ENCODE measurements at regions of chr1 and their contacts with region 1.

Region 1: GRCh38 chr1:166838766-166839599 is at the start of gene POGK:
- DNase-seq: peak; percentile 91 to 93
- H3K4me3 ChIP-seq: peak within 1 kb of the TSS; percentile 83
- H3K4me3 Mint-ChIP-seq: peak within 1 kb of the TSS; percentile 78
- H3K27ac Mint-ChIP-seq: peak within 1 kb of the TSS; percentile 91
- H3K4me1 ChIP-seq: peaks cover 40% of the 10 kb centered on the region
- H3K4me1 Mint-ChIP-seq: peaks cover 37% of the 10 kb centered on the region
- H3K27me3 ChIP-seq: no peaks in the 10 kb centered on the region
- H3K27me3 Mint-ChIP-seq: no peaks in the 10 kb centered on the region
- CTCF ChIP-seq: no peak
- total RNA-seq, gene POGK: 27.2 and 29.8 TPM in 2 replicates

Region 2: DNA sequence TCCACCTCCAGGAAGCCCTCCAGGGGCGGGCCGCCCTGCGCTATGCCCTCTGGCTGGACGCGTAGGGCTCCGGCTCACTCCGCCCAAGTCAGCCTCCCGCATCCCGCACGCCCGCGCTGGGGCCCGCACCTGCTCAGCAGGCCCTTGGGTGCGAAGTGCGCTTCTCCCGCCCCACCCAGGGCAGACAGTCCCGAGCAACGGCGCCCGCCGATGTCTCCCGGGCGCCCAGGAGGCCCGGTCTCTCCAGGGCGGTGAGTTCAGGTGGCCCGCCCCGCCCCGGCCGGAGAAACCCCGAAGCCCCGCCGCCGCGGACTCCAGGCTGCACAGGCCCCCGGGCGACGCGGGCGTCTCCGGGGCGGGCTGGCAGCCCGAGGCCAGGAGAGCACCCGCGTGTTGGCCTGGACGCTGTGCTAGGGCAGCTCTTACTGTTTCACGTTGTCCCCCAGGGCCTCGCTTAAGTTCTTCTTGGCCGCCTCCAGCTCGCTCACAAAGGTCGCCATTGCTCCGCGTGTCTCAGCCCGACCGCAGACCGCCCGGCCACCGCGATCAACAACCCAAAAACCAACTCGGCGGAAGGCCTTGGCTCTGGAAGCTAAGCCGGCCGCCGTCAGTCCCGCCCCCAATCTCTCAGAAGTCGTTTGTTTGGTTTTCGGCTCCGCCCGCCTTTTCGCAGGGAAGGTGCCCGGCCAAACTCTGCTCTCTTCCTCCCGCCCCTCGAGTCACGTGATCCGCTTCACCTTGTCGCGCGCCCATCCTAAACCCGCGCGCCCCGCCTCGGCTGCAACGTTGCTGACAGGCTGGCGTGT is 37.0 kb after region 1 on chr1 and contains the start of gene TADA1:
- CTCF ChIA-PET with region 1: interaction called, 3 read pairs
- POLR2A ChIA-PET with region 1: interaction called, 17 read pairs
- intact Hi-C with region 1: loop called (anchors 1 kb)
- DNase-seq: peak; percentile 98 to 99
- H3K4me3 ChIP-seq: peak within 1 kb of the TSS; percentile 57
- H3K4me3 Mint-ChIP-seq: peak within 1 kb of the TSS; percentile 87
- H3K27ac Mint-ChIP-seq: peak within 1 kb of the TSS; percentile 97
- H3K4me1 ChIP-seq: peaks cover 8% of the 10 kb centered on the region
- H3K4me1 Mint-ChIP-seq: peaks cover 17% of the 10 kb centered on the region
- H3K27me3 ChIP-seq: no peaks in the 10 kb centered on the region
- H3K27me3 Mint-ChIP-seq: no peaks in the 10 kb centered on the region
- CTCF ChIP-seq: no peak
- total RNA-seq, gene TADA1: 13.7 and 13.9 TPM in 2 replicates

Region 3: GRCh38 chr1:166888373-166889111 is 49.6 kb after region 1 on chr1:
- CTCF ChIA-PET with region 1: no interaction called
- POLR2A ChIA-PET with region 1: no interaction called
- intact Hi-C with region 1: no loop called
- DNase-seq: no peak
- H3K4me3 ChIP-seq: no peak overlapping the region
- H3K4me3 Mint-ChIP-seq: no peak overlapping the region
- H3K27ac Mint-ChIP-seq: no peak overlapping the region
- H3K4me1 ChIP-seq: no peaks in the 10 kb centered on the region
- H3K4me1 Mint-ChIP-seq: no peaks in the 10 kb centered on the region
- H3K27me3 ChIP-seq: no peaks in the 10 kb centered on the region; the same call in 1 of the 2 replicates
- H3K27me3 Mint-ChIP-seq: peaks cover 9% of the 10 kb centered on the region
- CTCF ChIP-seq: no peak

Measured in Caco-2 (cell line).